ENCODE measurements at regions of chr11 and their contacts with region 1.

Region 1: DNA sequence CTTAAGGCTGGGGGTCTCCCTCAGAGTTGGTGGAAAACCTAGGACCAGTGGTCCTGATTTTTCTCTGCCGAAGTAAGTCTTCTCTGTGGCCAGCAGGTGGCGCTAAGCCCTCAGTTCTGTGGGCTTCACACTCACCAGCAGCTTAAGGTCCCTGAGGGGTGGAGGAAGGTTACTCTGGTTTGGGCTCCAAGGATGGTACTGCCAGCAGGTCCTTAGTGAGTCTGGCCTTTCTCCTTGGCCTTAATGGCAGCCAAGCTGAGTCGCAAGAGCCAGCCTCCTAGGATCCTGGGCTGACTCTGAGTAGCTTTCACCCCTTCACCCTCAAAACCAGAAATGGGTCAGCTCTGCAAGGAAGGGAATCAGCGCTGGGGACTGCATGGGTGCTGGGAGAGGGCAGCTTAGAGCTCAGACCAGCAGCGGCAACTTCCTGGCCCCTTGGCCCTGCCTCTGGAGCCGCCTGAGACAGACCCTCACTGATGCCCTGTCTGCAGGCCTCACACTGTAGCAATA is 4.4 kb downstream of the KCNJ11 start:
- DNase-seq: peak; percentile 92
- H3K4me3 Mint-ChIP-seq: no peak overlapping the region
- H3K27ac Mint-ChIP-seq: no peak overlapping the region
- H3K4me1 Mint-ChIP-seq: peaks cover 3% of the 10 kb centered on the region
- H3K27me3 Mint-ChIP-seq: peaks cover 11% of the 10 kb centered on the region

Region 2: GRCh38 chr11:16809886-16810668 is 574.0 kb before region 1 on chr11:
- intact Hi-C with region 1: no loop called
- DNase-seq: no peak
- H3K4me3 Mint-ChIP-seq: no peak overlapping the region
- H3K27ac Mint-ChIP-seq: no peak overlapping the region
- H3K4me1 Mint-ChIP-seq: peaks cover 3% of the 10 kb centered on the region
- H3K27me3 Mint-ChIP-seq: no peaks in the 10 kb centered on the region

Region 3: DNA sequence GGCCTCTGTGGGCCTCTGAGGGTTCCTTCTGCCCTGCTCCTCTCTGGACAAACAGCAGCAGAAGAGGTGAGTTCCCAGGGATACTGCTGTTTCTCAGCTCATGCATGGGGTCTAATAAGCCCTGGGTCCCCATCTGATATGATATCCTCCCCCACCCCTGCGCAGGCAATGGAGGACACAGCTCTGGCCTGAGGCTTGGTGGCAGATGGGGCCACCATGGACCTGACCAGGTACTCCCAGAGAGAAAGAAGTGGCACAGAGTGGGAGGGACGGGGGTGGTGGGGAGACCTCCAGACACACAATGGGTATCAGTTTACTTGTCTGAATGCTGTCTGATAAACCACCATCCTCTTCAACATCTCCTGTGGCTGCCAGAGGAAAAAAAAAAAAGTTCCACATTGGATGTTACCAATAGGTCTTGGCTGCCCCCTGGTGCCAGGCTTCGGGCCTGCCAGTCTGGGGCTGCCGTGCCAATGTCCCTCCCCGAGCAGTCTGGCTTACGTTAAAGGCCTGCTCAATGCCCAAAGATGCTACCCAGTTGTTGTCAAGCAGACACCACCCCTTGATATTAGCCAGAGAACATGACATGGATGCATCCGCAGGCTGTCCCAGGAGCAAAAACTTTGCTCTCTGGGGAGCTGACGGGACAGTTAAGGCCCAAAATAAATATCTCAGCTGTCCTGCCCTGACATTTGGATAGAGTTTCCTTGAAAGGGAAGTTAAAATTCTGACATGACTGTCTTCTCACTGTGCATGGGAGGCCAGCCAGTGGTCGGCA is 120.5 kb after region 1 on chr11:
- intact Hi-C with region 1: loop called (anchors 1 kb)
- DNase-seq: peak; percentile 95
- H3K4me3 Mint-ChIP-seq: no peak overlapping the region
- H3K27ac Mint-ChIP-seq: no peak overlapping the region
- H3K4me1 Mint-ChIP-seq: no peaks in the 10 kb centered on the region
- H3K27me3 Mint-ChIP-seq: peaks cover 16% of the 10 kb centered on the region

Region 4: GRCh38 chr11:17528181-17528691 is 144.2 kb after region 1 on chr11:
- intact Hi-C with region 1: loop called (anchors 1 kb)
- DNase-seq: peak; percentile 82
- H3K4me3 Mint-ChIP-seq: no peak overlapping the region
- H3K27ac Mint-ChIP-seq: no peak overlapping the region
- H3K4me1 Mint-ChIP-seq: no peaks in the 10 kb centered on the region
- H3K27me3 Mint-ChIP-seq: peaks cover 11% of the 10 kb centered on the region